Activated CD4-positive, alpha-beta T cell treated with anti-CD3 and anti-CD28 coated beads for 36 hours (primary cell): ENCODE measurements at regions of chr1 and their contacts with region 1.

Region 1: DNA sequence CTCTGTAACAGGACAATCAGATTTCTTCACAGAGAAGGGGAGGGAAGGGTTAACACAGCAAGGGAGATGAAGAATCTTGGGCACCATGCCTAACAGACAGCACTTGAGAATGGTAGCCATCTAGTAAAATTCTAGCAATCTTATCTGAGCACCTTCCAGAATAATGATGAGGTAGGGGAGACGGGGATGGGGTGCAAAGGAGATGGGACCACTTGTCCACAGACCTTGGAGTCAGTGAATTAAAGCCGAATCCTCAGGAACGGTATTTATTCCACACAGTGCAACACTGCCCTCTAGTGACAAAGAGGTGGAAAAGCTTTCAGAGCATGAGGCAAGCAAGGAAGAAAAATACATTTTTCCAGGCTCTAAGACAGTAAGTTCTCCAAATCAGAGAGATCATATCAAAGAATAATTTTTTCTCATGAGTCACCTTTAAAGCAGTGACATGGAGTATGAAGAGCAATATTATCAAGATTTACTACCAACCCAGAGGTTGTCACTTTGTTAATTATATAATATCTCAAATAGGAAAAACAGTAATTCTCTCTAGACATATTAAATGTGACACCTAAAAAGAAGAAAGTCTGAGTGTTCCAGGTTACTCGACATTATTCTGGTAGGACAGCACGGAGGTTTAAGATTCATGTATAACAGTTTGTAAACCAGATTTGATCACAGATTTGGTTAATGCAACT is 43.3 kb upstream of the LPAR3 start:
- DNase-seq: peak; percentile 25
- ATAC-seq: peak; percentile 53
- H3K4me3 Mint-ChIP-seq: no peak overlapping the region
- H3K27ac Mint-ChIP-seq: no peak overlapping the region
- H3K4me1 Mint-ChIP-seq: peaks cover 4% of the 10 kb centered on the region
- H3K27me3 Mint-ChIP-seq: no peaks in the 10 kb centered on the region

Region 2: GRCh38 chr1:84668185-84668584 is 268.1 kb before region 1 on chr1:
- CTCF ChIA-PET with region 1: interaction called, 3 read pairs
- POLR2A ChIA-PET with region 1: no interaction called
- intact Hi-C with region 1: loop called in 1 of 2 experiments (anchors 5 kb)
- DNase-seq: no peak
- ATAC-seq: no peak
- H3K4me3 Mint-ChIP-seq: no peak overlapping the region
- H3K27ac Mint-ChIP-seq: no peak overlapping the region
- H3K4me1 Mint-ChIP-seq: peaks cover 5% of the 10 kb centered on the region
- H3K27me3 Mint-ChIP-seq: no peaks in the 10 kb centered on the region

Region 3: DNA sequence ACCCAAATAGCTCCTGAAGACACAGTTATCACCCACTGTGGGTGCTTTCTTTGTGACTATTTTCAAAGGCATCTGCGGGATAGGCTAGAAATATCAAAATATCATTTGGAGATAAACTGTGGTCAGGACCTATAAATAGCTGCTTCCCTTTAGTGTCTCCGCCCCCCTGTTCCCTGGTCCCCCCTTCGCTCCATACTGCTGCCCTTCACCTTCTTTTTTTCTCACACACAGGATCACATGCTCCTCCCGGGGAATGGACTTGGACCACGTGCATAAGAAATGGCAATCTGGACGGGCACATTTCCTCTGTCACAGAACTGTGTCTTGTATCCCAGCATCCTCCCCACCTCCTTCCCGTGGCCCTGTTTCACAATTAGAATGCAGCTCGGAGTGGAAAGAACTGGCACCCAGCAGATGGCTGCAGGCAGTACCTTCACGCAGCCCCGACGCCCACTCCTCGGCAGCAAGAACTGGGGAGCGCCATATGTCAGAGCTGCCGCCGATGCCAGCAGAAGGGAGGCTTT is 177.2 kb before region 1 on chr1:
- CTCF ChIA-PET with region 1: interaction called, 10 read pairs
- POLR2A ChIA-PET with region 1: no interaction called
- intact Hi-C with region 1: loop called (anchors 5 kb)
- DNase-seq: peak; percentile 58
- ATAC-seq: peak; percentile 64
- H3K4me3 Mint-ChIP-seq: peak overlapping the region; percentile 29
- H3K27ac Mint-ChIP-seq: peak overlapping the region; percentile 14
- H3K4me1 Mint-ChIP-seq: peaks cover 16% of the 10 kb centered on the region
- H3K27me3 Mint-ChIP-seq: peaks cover 8% of the 10 kb centered on the region

Region 4: DNA sequence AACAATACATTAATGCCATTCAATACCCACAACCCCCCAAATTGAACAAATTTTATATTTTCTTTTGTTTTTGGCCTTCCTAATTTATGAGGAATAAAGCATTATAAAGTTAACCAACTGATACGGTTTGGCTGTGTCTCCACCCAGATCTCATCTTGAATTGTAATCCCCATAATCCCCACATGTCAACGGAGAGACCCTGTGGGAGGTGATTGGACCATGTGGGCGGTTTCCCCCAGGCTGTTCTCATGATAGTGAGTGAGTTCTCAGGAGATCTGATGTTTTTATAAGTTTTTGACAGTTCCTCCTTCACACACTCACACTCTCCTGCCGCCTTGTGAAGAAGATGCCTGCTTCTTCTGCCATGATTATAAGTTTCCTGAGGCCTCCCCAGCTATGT is 118.4 kb after region 1 on chr1:
- CTCF ChIA-PET with region 1: no interaction called
- POLR2A ChIA-PET with region 1: no interaction called
- intact Hi-C with region 1: no loop called
- DNase-seq: no peak
- ATAC-seq: no peak
- H3K4me3 Mint-ChIP-seq: no peak overlapping the region
- H3K27ac Mint-ChIP-seq: no peak overlapping the region
- H3K4me1 Mint-ChIP-seq: peaks cover 12% of the 10 kb centered on the region
- H3K27me3 Mint-ChIP-seq: peaks cover 13% of the 10 kb centered on the region